HepG2 (cell line): ENCODE measurements at regions of chr20 and their contacts with region 1.

Region 1: DNA sequence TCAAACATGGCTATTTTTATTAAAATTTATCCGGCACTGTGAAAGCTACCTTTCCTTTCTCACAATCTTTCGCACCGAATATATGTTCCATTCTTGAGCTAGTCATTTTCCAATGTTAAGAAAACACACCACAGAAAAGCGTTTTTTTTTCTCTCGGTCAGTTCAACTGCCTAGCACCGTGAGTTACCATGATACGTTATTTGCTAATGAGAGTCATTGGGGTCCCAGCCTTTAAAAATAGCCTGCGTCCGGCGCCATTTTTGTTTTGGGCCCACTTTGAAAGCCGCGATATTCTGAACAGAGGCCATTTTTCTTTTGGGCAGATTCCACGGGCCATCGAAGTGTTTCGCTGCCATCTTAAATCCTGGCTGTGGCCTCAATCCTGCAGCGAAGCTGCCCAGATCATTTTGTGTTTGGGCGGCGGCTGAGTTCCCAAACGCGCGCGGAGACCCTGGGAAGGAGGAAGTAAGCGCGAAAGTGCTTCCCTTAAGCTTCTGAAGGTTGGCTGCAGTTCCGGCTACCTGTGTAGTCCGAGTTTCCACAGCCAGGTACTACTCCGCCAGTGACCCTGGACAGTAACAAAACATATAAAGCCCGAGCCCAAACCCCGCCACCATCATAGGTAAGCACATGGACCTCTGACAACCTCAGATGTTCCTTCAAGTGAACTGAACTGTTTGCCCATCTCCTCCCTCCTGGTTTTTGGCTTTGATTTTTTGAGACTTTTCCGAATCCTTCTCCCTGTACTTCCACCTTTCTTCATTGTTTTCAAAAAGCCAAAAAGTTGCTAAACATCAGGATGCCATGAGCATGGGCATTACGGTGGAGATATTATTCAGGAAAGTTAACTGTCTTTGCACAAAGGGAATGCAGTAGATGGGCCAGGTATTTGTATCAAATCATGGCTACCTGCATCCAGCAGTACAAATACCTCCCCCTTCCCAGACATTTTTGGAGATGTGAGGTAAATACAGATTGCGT is at the start of gene SLX4IP:
- DNase-seq: peak; percentile 99
- ATAC-seq: peak; percentile 80
- H3K4me3 ChIP-seq: peak within 1 kb of the TSS; percentile 80 to 91 (median 90)
- H3K27ac ChIP-seq: peak within 1 kb of the TSS; percentile 85
- H3K4me1 ChIP-seq: peaks cover 51% of the 10 kb centered on the region
- H3K27me3 ChIP-seq: no peaks in the 10 kb centered on the region; a peak in 1 of 5 replicates
- CTCF ChIP-seq: peak; percentile 11; the same call in 1 of the 2 replicates
- EP300 ChIP-seq: peak in 1 of 2 experiments; percentile 37; a peak in 3 of 4 replicates
- POLR2A ChIP-seq: peak; percentile 72 to 92
- RAD21 ChIP-seq: peak; percentile 8; the same call in 1 of the 2 replicates
- total RNA-seq, gene SLX4IP: 7.3 and 9.5 TPM in 2 replicates

Region 2: DNA sequence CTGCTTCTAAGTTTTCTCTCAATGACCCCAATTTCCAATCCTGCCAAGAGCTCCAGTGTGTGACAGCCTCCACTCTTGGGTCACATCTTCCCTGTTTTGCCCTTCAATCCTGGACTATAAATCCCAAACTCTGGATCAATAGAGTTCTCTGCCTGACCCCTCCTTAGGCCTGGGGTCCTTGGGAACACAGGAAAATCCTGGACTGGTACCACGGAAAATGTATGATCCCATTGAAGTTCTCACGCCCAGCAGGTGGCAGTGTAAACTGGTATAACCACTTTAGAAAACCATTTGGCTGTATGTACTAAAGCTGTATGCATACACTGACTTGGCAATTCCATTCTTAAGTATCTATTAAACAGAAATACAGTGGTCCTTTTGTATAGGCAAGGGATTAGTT is 118.5 kb before region 1 on chr20:
- CTCF ChIA-PET with region 1: no interaction called
- POLR2A ChIA-PET with region 1: interaction called, 26 read pairs
- in situ Hi-C with region 1: no loop called
- intact Hi-C with region 1: no loop called
- DNase-seq: peak; percentile 78
- ATAC-seq: peak; percentile 95
- H3K4me3 ChIP-seq: no peak overlapping the region
- H3K27ac ChIP-seq: no peak overlapping the region
- H3K4me1 ChIP-seq: peaks cover 24% of the 10 kb centered on the region
- H3K27me3 ChIP-seq: no peaks in the 10 kb centered on the region
- CTCF ChIP-seq: peak; percentile 93
- EP300 ChIP-seq: no peak
- POLR2A ChIP-seq: no peak
- RAD21 ChIP-seq: peak; percentile 95

Region 3: DNA sequence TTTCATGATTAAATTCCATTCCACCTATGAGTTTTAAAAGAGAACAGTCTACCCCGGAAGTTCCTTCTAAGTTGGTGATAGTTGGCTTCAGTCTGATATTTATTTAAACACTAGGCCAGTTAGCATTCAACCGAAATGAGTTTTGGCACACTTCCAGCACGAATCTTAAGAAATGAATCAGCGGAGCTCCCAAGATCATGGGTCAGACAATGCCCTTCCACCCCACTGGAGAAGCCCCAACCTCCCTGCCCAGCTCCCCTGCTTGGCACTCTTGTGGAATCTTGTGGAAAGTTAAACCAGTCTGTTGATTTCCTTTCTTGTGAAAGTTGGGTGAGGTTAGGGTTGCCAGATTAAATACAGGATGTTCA is 65.4 kb before region 1 on chr20:
- CTCF ChIA-PET with region 1: no interaction called
- POLR2A ChIA-PET with region 1: interaction called, 20 read pairs
- in situ Hi-C with region 1: no loop called
- intact Hi-C with region 1: loop called (anchors 2 kb)
- DNase-seq: no peak
- ATAC-seq: peak; percentile 14
- H3K4me3 ChIP-seq: peak overlapping the region; percentile 2 to 54 (median 28); a peak in 4 of 6 replicates
- H3K27ac ChIP-seq: peak overlapping the region; percentile 70
- H3K4me1 ChIP-seq: peaks cover 76% of the 10 kb centered on the region
- H3K27me3 ChIP-seq: no peaks in the 10 kb centered on the region
- CTCF ChIP-seq: no peak
- EP300 ChIP-seq: no peak
- POLR2A ChIP-seq: no peak
- RAD21 ChIP-seq: no peak

Region 4: GRCh38 chr20:10511509-10512251 is 76.6 kb after region 1 on chr20:
- CTCF ChIA-PET with region 1: no interaction called
- POLR2A ChIA-PET with region 1: interaction called, 36 read pairs
- in situ Hi-C with region 1: no loop called
- intact Hi-C with region 1: no loop called
- DNase-seq: peak; percentile 87
- ATAC-seq: peak; percentile 96
- H3K4me3 ChIP-seq: no peak overlapping the region; a peak in 1 of 6 replicates
- H3K27ac ChIP-seq: peak overlapping the region; percentile 51
- H3K4me1 ChIP-seq: peaks cover 31% of the 10 kb centered on the region
- H3K27me3 ChIP-seq: no peaks in the 10 kb centered on the region
- CTCF ChIP-seq: no peak
- EP300 ChIP-seq: peak in 1 of 2 experiments; percentile 81; a peak in 2 of 4 replicates
- POLR2A ChIP-seq: no peak
- RAD21 ChIP-seq: no peak

Region 5: DNA sequence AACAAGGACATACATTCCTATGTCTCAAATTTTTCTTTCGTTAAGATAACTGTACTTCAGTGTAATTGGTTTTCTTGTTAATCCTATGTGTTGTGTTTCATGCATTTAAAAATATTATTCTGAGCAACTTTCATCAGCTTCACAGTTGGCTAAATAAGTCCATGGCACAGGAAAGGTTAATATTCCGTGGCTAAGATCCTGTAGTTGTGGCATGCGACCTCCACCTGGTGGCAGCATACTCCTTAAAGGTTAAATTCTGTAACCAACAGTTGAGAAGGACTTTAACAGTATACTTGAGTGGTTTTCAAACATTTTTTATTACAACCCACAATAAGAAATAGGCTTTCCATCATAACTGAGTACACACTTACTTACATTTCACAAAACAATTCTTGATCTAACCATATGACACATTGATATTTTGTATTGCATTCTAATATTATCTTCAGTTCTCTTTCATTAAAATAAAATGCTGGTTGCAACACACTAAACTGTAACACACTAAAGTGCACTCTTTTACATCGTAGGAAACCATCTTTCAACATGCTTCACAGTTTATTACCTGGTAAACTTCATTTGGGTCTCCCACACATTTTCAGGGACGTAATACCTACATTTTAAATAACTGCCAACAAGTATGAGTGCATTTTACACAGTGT is 118.3 kb after region 1 on chr20:
- CTCF ChIA-PET with region 1: no interaction called
- POLR2A ChIA-PET with region 1: interaction called, 13 read pairs
- in situ Hi-C with region 1: no loop called
- intact Hi-C with region 1: no loop called
- DNase-seq: peak; percentile 84
- ATAC-seq: peak; percentile 70
- H3K4me3 ChIP-seq: no peak overlapping the region
- H3K27ac ChIP-seq: peak overlapping the region; percentile 7
- H3K4me1 ChIP-seq: peaks cover 79% of the 10 kb centered on the region
- H3K27me3 ChIP-seq: no peaks in the 10 kb centered on the region
- CTCF ChIP-seq: peak; percentile 96
- EP300 ChIP-seq: no peak
- POLR2A ChIP-seq: no peak
- RAD21 ChIP-seq: peak; percentile 97

Region 6: DNA sequence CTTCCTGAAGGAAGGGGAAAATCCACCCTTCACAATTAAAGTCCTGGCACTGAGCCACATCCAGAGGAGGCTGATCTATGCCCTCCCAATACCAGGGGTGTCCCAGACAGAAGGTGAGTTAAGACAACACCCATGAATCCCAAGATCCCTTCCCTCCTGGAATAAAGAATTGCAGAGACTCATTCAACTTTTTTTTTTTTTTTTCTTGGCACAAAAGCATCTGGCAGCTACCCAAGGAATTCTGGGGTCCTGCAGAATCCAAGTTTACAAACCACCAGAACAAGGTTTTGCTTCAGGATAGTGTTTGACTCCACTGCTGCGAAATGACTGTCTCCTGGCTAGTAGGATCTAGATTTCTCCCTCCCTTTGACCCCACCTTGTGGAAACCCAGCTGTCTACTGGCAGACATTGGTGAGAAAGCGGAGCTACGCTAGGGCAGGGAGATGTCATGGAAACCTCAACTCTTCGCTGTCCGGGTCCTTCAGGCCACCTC is 201.2 kb after region 1 on chr20:
- CTCF ChIA-PET with region 1: no interaction called
- POLR2A ChIA-PET with region 1: no interaction called
- in situ Hi-C with region 1: loop called (anchors 10 kb)
- intact Hi-C with region 1: loop called (anchors 10 kb)
- DNase-seq: peak; percentile 35
- ATAC-seq: peak; percentile 19
- H3K4me3 ChIP-seq: no peak overlapping the region
- H3K27ac ChIP-seq: no peak overlapping the region
- H3K4me1 ChIP-seq: no peaks in the 10 kb centered on the region
- H3K27me3 ChIP-seq: no peaks in the 10 kb centered on the region
- CTCF ChIP-seq: 0 out of 2 replicates have a peak, but pooled peaks have one; percentile 27
- EP300 ChIP-seq: no peak
- POLR2A ChIP-seq: no peak
- RAD21 ChIP-seq: no peak

Region 7: GRCh38 chr20:11204926-11205768 is 770.0 kb after region 1 on chr20:
- CTCF ChIA-PET with region 1: no interaction called
- POLR2A ChIA-PET with region 1: interaction called, 3 read pairs
- in situ Hi-C with region 1: no loop called
- intact Hi-C with region 1: loop called (anchors 1 kb)
- DNase-seq: peak; percentile 71
- ATAC-seq: peak; percentile 98
- H3K4me3 ChIP-seq: no peak overlapping the region
- H3K27ac ChIP-seq: no peak overlapping the region
- H3K4me1 ChIP-seq: peaks cover 11% of the 10 kb centered on the region
- H3K27me3 ChIP-seq: no peaks in the 10 kb centered on the region
- CTCF ChIP-seq: peak; percentile 91
- EP300 ChIP-seq: no peak
- POLR2A ChIP-seq: no peak
- RAD21 ChIP-seq: peak; percentile 74